IMR-90 (cell line): ENCODE measurements at regions of chr17 and their contacts with region 1.

Region 1: DNA sequence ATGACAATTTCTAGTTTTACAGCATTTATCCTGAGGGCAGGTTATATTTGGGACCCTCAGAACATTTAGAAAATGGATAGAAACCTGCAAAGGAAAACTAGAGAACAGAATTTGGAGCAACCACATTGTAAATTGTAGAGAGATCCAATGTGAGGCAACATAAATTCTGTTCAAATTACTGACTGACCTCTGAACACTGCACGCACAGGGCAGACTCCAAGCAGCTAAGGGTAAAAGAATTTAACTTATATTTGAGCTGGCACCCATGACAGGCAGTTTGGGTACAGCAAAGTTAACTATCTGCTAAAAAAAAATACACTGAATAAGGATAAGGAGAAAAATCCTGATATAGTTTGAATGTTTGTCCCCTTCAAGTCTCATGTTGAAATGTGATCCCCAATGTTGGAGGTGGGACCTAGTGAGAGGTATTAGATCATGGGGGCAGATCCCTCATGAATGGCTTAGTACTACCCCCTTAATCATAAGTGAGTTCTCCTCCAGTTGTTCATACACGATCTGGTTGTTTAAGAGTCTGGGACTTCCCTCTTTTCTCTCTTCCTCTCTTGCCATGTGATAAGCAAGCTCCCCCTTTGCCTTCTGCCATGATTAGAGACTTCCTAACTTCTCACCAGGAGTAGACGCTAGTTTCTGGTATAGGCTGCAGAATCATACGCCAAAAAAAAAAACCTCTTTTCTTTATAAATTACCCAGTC is 75.7 kb downstream of the FBXL20 start:
- DNase-seq: no peak
- ATAC-seq: no peak
- H3K4me3 ChIP-seq: no peak overlapping the region
- H3K27ac ChIP-seq: no peak overlapping the region
- H3K4me1 ChIP-seq: peaks cover 2% of the 10 kb centered on the region; the same call in 1 of the 2 replicates
- H3K27me3 ChIP-seq: no peaks in the 10 kb centered on the region
- CTCF ChIP-seq: no peak
- POLR2A ChIP-seq: no peak
- RAD21 ChIP-seq: no peak

Region 2: GRCh38 chr17:39365242-39365641 is 39.6 kb after region 1 on chr17:
- CTCF ChIA-PET with region 1: interaction called, 4 read pairs
- POLR2A ChIA-PET with region 1: no interaction called
- dilution Hi-C with region 1: no loop called
- in situ Hi-C with region 1: no loop called
- intact Hi-C with region 1: loop called (anchors 5 kb)
- DNase-seq: peak; percentile 83
- ATAC-seq: peak; percentile 86
- H3K4me3 ChIP-seq: no peak overlapping the region
- H3K27ac ChIP-seq: no peak overlapping the region
- H3K4me1 ChIP-seq: peaks cover 7% of the 10 kb centered on the region
- H3K27me3 ChIP-seq: no peaks in the 10 kb centered on the region
- CTCF ChIP-seq: no peak
- POLR2A ChIP-seq: no peak
- RAD21 ChIP-seq: no peak

Region 3: DNA sequence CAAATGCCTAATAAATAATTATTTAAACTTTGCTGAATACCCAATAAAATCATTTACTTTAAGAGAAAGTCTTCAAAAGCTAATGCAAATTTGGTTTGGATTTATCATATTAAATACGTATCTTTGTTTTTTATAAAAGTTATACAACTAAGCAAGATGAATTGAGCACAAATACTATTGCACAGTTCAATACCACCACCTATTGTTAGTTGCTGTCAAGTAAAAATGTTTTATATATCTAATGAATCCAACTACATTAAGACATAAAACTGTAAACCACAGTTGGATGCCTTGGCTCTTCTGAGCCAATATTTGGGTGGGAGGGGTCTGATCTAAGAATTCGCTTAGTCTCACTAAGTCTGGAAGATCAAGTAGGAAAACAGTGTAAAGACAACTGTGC is 68.1 kb after region 1 on chr17:
- CTCF ChIA-PET with region 1: no interaction called
- POLR2A ChIA-PET with region 1: no interaction called
- dilution Hi-C with region 1: no loop called
- in situ Hi-C with region 1: no loop called
- intact Hi-C with region 1: loop called (anchors 10 kb)
- DNase-seq: no peak
- ATAC-seq: no peak
- H3K4me3 ChIP-seq: no peak overlapping the region
- H3K27ac ChIP-seq: no peak overlapping the region
- H3K4me1 ChIP-seq: no peaks in the 10 kb centered on the region
- H3K27me3 ChIP-seq: no peaks in the 10 kb centered on the region
- CTCF ChIP-seq: no peak
- POLR2A ChIP-seq: no peak
- RAD21 ChIP-seq: peak; percentile 28